H1 (cell line): ENCODE measurements at regions of chr9 and their contacts with region 1.

Region 1: DNA sequence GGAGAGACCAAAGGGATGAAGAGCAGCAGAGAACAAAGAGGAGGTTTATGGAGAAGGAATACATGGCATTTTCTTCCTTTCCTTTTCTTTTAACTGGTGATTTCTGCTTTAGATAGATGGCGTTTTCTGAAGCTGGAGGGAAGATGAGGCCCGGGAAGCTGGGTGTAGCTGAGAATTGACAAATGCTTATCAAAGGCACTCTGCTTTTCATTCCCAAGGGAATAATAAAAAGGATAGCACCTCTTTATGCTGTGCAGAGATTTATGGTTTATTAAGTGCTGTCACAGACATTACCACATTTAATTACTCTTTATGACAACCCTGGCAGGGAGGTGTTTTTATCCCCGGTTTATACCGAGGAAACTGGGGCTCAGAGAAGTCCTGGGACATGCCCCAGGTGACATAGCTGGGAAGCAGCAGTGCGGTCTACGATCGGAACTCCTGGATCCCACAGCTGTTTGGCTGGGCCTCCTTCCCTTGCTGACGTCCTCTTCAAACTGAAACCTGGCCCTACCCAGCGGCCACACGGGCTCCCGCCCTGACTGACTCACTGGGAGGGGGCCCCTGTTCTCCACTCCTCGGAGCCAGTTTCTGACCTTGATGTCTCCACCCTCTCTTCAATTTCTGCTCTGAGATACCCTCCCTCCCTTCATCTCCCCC is 8.2 kb upstream of the EPB41L4B start:
- DNase-seq: no peak
- H3K4me3 ChIP-seq: no peak overlapping the region
- H3K27ac ChIP-seq: no peak overlapping the region
- H3K4me1 ChIP-seq: peaks cover 0 to 4% (median 0%) of the 10 kb centered on the region in 4 experiments; a peak in 2 of 7 replicates
- H3K27me3 ChIP-seq: no peaks in the 10 kb centered on the region
- CTCF ChIP-seq: no peak
- EP300 ChIP-seq: no peak
- POLR2A ChIP-seq: no peak
- RAD21 ChIP-seq: no peak

Region 2: DNA sequence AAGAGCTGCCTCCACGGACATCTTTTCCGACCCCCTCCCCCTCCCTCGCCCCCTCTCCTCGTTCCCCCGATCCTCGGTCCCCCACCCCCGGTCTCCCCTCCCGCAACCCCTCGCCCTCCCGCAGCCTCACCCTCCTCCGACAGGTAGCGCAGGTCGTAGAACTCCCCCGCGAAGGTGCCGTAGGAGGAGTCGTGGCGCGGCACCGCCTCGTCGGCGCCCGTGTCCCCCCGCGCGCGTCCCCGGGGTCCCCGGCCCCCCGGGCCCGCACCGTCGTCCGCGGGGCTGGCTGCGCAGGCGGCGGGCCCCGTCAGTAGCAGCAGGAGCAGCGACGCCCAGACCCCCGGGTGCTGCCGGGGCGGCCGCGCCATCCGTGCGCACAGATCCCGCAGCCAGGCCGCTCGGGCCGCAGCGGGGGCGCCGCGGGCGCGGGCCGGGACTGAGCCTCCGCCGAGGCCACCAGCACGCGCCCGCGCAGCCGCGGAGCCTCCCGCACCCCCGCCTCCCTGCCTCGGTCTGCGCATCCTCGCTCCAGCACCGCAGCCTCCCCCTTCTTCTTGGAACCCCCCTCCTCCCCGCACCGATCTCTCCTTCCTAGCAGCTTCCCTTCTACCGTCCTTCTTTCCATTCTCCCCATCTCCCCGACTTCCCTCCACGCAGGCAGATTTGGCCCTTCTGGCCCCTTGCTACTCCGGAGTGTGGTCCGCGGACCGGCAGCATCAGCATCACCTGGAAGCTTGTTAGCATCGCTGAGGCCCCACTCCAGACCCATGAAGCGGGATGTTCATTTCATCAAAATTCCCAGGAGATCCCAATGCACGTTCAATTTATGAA is 162.1 kb before region 1 on chr9 and contains the start of gene FRRS1L:
- CTCF ChIA-PET with region 1: no interaction called
- POLR2A ChIA-PET with region 1: no interaction called
- DNase-seq: peak in 1 of 2 experiments; percentile 66
- H3K4me3 ChIP-seq: peak within 1 kb of the TSS; percentile 45 to 67 (median 54)
- H3K27ac ChIP-seq: no peak within 1 kb of the TSS
- H3K4me1 ChIP-seq: peaks cover 0 to 2% (median 0%) of the 10 kb centered on the region in 4 experiments; a peak in 2 of 7 replicates
- H3K27me3 ChIP-seq: peaks cover 6 to 23% (median 18%) of the 10 kb centered on the region in 4 experiments
- CTCF ChIP-seq: no peak
- EP300 ChIP-seq: no peak
- POLR2A ChIP-seq: no peak
- RAD21 ChIP-seq: no peak
- total RNA-seq, gene FRRS1L: 2.1 and 2.2 TPM in 2 replicates

Region 3: DNA sequence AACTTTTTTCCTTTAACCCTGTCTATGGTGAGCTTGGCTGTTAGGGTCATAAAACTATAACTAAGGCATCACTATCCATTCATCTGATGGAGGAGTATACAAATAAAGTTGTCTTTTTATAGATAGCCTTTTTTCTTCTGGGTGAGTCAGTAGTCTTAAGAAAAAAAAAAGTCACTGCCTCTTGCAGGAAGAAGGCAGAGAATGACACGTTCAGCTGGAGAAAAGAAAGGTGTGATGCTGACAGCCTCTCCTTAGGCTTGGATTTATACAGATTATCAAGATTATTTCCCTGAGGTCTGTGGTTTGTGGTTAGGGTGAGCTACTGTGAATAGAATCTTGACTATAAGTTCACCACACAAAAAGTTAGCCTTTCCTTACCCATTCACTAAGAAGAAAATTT is 31.2 kb before region 1 on chr9:
- CTCF ChIA-PET with region 1: no interaction called
- POLR2A ChIA-PET with region 1: no interaction called
- DNase-seq: no peak
- H3K4me3 ChIP-seq: no peak overlapping the region
- H3K27ac ChIP-seq: no peak overlapping the region
- H3K4me1 ChIP-seq: peaks cover 0 to 4% (median 0%) of the 10 kb centered on the region in 4 experiments; a peak in 3 of 7 replicates
- H3K27me3 ChIP-seq: no peaks in the 10 kb centered on the region
- CTCF ChIP-seq: no peak
- EP300 ChIP-seq: no peak
- POLR2A ChIP-seq: no peak
- RAD21 ChIP-seq: no peak

Region 4: DNA sequence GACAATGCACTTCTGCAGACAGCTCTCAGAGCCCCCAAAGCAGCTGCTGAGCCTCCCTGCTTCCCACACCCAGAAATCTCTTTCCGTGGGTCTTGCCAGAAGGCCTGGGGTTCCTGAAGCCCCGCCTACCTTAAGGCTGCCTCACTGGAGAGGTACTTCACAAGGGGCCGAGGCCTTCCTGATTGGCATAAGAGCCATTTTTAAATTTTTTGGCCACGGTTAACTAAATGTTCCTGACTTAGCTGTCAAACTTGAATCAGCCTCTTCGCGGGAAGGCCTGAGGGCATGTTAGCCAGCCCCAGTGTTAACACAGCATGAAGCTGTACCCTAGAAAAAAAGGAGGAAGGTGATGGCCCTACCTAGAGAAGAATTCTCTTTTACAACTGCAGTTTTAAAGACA is 12.5 kb after region 1 on chr9:
- CTCF ChIA-PET with region 1: interaction called, 21 read pairs
- POLR2A ChIA-PET with region 1: interaction called, 4 read pairs
- DNase-seq: no peak
- H3K4me3 ChIP-seq: no peak overlapping the region
- H3K27ac ChIP-seq: no peak overlapping the region
- H3K4me1 ChIP-seq: peaks cover 6 to 9% (median 7%) of the 10 kb centered on the region in 4 experiments; a peak in 5 of 7 replicates
- H3K27me3 ChIP-seq: no peaks in the 10 kb centered on the region
- CTCF ChIP-seq: no peak
- EP300 ChIP-seq: no peak
- POLR2A ChIP-seq: no peak
- RAD21 ChIP-seq: no peak

Region 5: GRCh38 chr9:109349421-109349846 is 20.3 kb after region 1 on chr9:
- CTCF ChIA-PET with region 1: interaction called, 21 read pairs
- POLR2A ChIA-PET with region 1: interaction called, 3 read pairs
- DNase-seq: no peak
- H3K4me3 ChIP-seq: no peak overlapping the region
- H3K27ac ChIP-seq: no peak overlapping the region
- H3K4me1 ChIP-seq: peaks cover 6 to 9% (median 7%) of the 10 kb centered on the region in 4 experiments; a peak in 5 of 7 replicates
- H3K27me3 ChIP-seq: no peaks in the 10 kb centered on the region
- CTCF ChIP-seq: no peak
- EP300 ChIP-seq: no peak
- POLR2A ChIP-seq: no peak
- RAD21 ChIP-seq: no peak